ENCODE measurements at regions of chr7 and their contacts with region 1.

Region 1: GRCh38 chr7:111098011-111098925 is 7.3 kb downstream of the LRRN3 start:
- DNase-seq: peak; percentile 83
- H3K4me3 Mint-ChIP-seq: peak overlapping the region; percentile 70
- H3K27ac Mint-ChIP-seq: peak overlapping the region; percentile 85
- H3K4me1 Mint-ChIP-seq: peaks cover 68% of the 10 kb centered on the region
- H3K27me3 Mint-ChIP-seq: no peaks in the 10 kb centered on the region

Region 2: GRCh38 chr7:110003827-110004226 is 1094.4 kb before region 1 on chr7:
- CTCF ChIA-PET with region 1: no interaction called
- intact Hi-C with region 1: loop called (anchors 10 kb)
- DNase-seq: no peak
- H3K4me3 Mint-ChIP-seq: no peak overlapping the region
- H3K27ac Mint-ChIP-seq: no peak overlapping the region
- H3K4me1 Mint-ChIP-seq: no peaks in the 10 kb centered on the region
- H3K27me3 Mint-ChIP-seq: no peaks in the 10 kb centered on the region

Region 3: GRCh38 chr7:110432061-110432553 is 666.2 kb before region 1 on chr7:
- CTCF ChIA-PET with region 1: no interaction called
- intact Hi-C with region 1: loop called (anchors 10 kb)
- DNase-seq: no peak
- H3K4me3 Mint-ChIP-seq: no peak overlapping the region
- H3K27ac Mint-ChIP-seq: no peak overlapping the region
- H3K4me1 Mint-ChIP-seq: no peaks in the 10 kb centered on the region
- H3K27me3 Mint-ChIP-seq: no peaks in the 10 kb centered on the region

Region 4: DNA sequence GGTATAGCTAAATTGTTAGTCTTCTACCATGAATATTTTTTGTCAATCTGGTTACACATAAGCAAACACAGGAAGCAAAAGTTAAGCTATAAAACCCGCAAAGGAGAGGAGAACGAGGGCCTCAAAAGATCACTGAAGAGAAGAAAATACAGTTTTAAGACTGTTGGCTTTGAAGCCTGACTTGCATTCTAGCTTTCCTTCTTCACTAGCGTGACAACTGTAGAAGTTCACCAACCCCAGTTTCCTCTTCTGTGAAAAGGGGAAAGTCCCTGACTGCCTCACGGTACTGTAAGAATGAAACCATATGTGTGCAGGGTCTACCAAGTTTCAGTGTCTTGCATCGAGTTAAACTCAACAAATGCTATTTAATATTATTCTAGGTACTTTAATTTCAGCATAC is 14.9 kb before region 1 on chr7:
- CTCF ChIA-PET with region 1: interaction called, 13 read pairs
- intact Hi-C with region 1: loop called (anchors 2 kb)
- DNase-seq: peak; percentile 70
- H3K4me3 Mint-ChIP-seq: no peak overlapping the region
- H3K27ac Mint-ChIP-seq: peak overlapping the region; percentile 76
- H3K4me1 Mint-ChIP-seq: peaks cover 72% of the 10 kb centered on the region
- H3K27me3 Mint-ChIP-seq: no peaks in the 10 kb centered on the region

Region 5: DNA sequence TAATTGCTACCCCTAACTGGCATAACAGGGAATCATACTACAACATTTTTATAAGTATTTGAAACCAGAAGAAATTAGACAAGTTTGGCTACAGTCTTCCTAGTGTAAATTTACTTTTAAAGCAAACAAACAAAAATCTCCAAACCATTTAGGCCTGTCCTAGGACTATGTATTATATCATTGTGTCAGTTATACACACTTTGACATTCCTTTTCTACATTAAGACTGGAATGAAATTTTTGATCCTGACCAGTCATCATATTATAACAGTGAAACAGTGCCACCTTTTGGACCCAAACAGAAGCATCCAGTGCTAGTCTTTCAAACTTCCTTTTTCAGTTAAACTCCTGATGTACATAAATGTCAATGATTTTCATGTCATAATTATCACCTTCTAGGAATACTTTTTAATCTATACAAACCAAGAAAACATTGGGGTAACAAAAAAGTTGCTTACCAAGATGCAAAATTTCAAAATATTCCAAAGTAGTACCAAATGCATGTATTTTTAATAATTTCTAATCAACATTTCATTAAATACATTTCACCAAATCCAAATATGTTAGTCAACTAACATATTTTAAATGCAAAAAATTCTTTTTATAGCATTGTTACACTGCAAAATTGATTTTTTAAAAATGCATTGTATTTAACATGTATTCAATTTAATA is 388.3 kb after region 1 on chr7:
- CTCF ChIA-PET with region 1: no interaction called
- intact Hi-C with region 1: loop called (anchors 1 kb)
- DNase-seq: peak; percentile 15
- H3K4me3 Mint-ChIP-seq: no peak overlapping the region
- H3K27ac Mint-ChIP-seq: no peak overlapping the region
- H3K4me1 Mint-ChIP-seq: no peaks in the 10 kb centered on the region
- H3K27me3 Mint-ChIP-seq: no peaks in the 10 kb centered on the region

Region 6: GRCh38 chr7:111735661-111736551 is 637.6 kb after region 1 on chr7:
- CTCF ChIA-PET with region 1: interaction called, 8 read pairs
- intact Hi-C with region 1: loop called (anchors 2 kb)
- DNase-seq: peak; percentile 71
- H3K4me3 Mint-ChIP-seq: no peak overlapping the region
- H3K27ac Mint-ChIP-seq: no peak overlapping the region
- H3K4me1 Mint-ChIP-seq: no peaks in the 10 kb centered on the region
- H3K27me3 Mint-ChIP-seq: no peaks in the 10 kb centered on the region